ENCODE measurements at regions of chr4 and their contacts with region 1.

Region 1: DNA sequence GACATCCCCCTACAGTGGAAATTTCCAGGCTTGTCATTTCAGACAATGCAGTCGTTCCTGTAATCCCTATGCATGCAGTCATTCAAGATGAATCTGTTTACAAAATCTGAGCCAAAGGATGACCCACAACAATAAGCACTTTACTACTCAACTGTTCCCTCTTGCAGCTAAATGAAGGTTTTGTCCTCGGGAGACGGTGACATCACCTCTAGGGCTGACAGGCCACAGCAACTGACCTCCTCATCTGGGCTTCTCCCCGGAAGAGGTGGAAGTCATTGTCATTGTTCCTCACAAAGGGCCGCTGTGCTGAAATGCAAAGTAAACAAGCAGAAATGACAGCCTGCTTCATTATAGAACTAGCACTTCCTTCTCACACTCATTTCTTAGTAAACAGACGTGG is 29.2 kb downstream of the CLRN2 start:
- DNase-seq: no peak
- H3K4me3 ChIP-seq: no peak overlapping the region
- H3K4me3 Mint-ChIP-seq: no peak overlapping the region
- H3K27ac ChIP-seq: no peak overlapping the region
- H3K27ac Mint-ChIP-seq: no peak overlapping the region
- H3K4me1 ChIP-seq: no peaks in the 10 kb centered on the region
- H3K4me1 Mint-ChIP-seq: peaks cover 0 to 6% (median 4%) of the 10 kb centered on the region in 3 donors
- H3K27me3 ChIP-seq: no peaks in the 10 kb centered on the region
- H3K27me3 Mint-ChIP-seq: peaks cover 5 to 36% of the 10 kb centered on the region in 2 donors

Region 2: GRCh38 chr4:17557880-17558279 is 13.7 kb after region 1 on chr4:
- CTCF ChIA-PET with region 1: interaction called, 15 read pairs
- POLR2A ChIA-PET with region 1: no interaction called
- DNase-seq: no peak
- H3K4me3 ChIP-seq: no peak overlapping the region
- H3K4me3 Mint-ChIP-seq: no peak overlapping the region
- H3K27ac ChIP-seq: no peak overlapping the region
- H3K27ac Mint-ChIP-seq: no peak overlapping the region
- H3K4me1 ChIP-seq: no peaks in the 10 kb centered on the region
- H3K4me1 Mint-ChIP-seq: no peaks in the 10 kb centered on the region
- H3K27me3 ChIP-seq: peaks cover 3% of the 10 kb centered on the region
- H3K27me3 Mint-ChIP-seq: peaks cover 1 to 5% of the 10 kb centered on the region in 2 donors

Region 3: GRCh38 chr4:17636696-17637622 is 92.8 kb after region 1 on chr4:
- CTCF ChIA-PET with region 1: interaction called, 53 read pairs
- POLR2A ChIA-PET with region 1: no interaction called
- DNase-seq: peak; percentile 50 to 78 (median 62)
- H3K4me3 ChIP-seq: no peak overlapping the region
- H3K4me3 Mint-ChIP-seq: no peak overlapping the region
- H3K27ac ChIP-seq: no peak overlapping the region
- H3K27ac Mint-ChIP-seq: peak overlapping the region in 3 of 8 donors; percentile 47 to 89 (median 54)
- H3K4me1 ChIP-seq: no peaks in the 10 kb centered on the region
- H3K4me1 Mint-ChIP-seq: peaks cover 0 to 4% (median 3%) of the 10 kb centered on the region in 3 donors
- H3K27me3 ChIP-seq: no peaks in the 10 kb centered on the region
- H3K27me3 Mint-ChIP-seq: no peaks in the 10 kb centered on the region

Region 4: DNA sequence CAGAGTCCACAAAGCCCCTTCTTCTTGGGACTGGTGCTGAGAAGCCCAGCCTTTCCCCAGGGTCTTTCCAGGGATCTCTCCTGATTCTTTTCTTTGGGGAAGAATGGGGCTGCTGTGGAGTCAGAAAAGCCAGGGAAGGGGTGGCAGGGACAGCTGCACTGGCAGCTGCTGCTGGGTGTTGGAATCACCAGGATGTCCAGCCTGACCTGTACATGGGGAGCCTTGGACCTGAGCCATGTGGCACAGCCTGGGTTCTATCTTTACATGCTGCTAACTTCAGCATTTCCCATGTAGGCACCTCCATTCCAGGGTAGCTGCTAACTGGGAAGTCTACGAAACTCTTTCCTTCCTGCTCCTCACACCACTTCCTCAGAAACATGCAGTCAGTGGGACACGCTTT is 106.2 kb after region 1 on chr4:
- CTCF ChIA-PET with region 1: no interaction called
- POLR2A ChIA-PET with region 1: no interaction called
- DNase-seq: no peak
- H3K4me3 ChIP-seq: no peak overlapping the region
- H3K4me3 Mint-ChIP-seq: no peak overlapping the region
- H3K27ac ChIP-seq: no peak overlapping the region
- H3K27ac Mint-ChIP-seq: no peak overlapping the region
- H3K4me1 ChIP-seq: peaks cover 14% of the 10 kb centered on the region
- H3K4me1 Mint-ChIP-seq: peaks cover 8 to 14% (median 13%) of the 10 kb centered on the region in 3 donors
- H3K27me3 ChIP-seq: no peaks in the 10 kb centered on the region
- H3K27me3 Mint-ChIP-seq: peaks cover 3 to 5% of the 10 kb centered on the region in 2 donors

Region 5: GRCh38 chr4:17810260-17811077 is 266.3 kb after region 1 on chr4 and contains the starts of genes DCAF16 and NCAPG:
- CTCF ChIA-PET with region 1: interaction called, 13 read pairs
- POLR2A ChIA-PET with region 1: no interaction called
- DNase-seq: peak; percentile 97 to 100 (median 99)
- H3K4me3 ChIP-seq: peak within 1 kb of the TSS; percentile 89
- H3K4me3 Mint-ChIP-seq: peak within 1 kb of the TSS; percentile 95 to 100 (median 98)
- H3K27ac ChIP-seq: peak within 1 kb of the TSS; percentile 98
- H3K27ac Mint-ChIP-seq: peak within 1 kb of the TSS; percentile 96 to 100 (median 100)
- H3K4me1 ChIP-seq: peaks cover 45% of the 10 kb centered on the region
- H3K4me1 Mint-ChIP-seq: peaks cover 62 to 78% (median 72%) of the 10 kb centered on the region in 3 donors
- H3K27me3 ChIP-seq: no peaks in the 10 kb centered on the region
- H3K27me3 Mint-ChIP-seq: no peaks in the 10 kb centered on the region
- total RNA-seq, gene DCAF16: 30.5 to 32.4 TPM
- total RNA-seq, gene NCAPG: 48.2 to 52.1 TPM

Measured in CD8-positive, alpha-beta memory T cell (primary cell).